AG04450 (cell line): ENCODE measurements at regions of chr18 and their contacts with region 1.

Region 1: GRCh38 chr18:23032030-23032582 is 99.0 kb downstream of the RBBP8 start:
- DNase-seq: peak; percentile 58
- H3K4me3 ChIP-seq: no peak overlapping the region
- H3K27ac ChIP-seq: peak overlapping the region; percentile 81
- H3K27me3 ChIP-seq: no peaks in the 10 kb centered on the region
- CTCF ChIP-seq: no peak

Region 2: DNA sequence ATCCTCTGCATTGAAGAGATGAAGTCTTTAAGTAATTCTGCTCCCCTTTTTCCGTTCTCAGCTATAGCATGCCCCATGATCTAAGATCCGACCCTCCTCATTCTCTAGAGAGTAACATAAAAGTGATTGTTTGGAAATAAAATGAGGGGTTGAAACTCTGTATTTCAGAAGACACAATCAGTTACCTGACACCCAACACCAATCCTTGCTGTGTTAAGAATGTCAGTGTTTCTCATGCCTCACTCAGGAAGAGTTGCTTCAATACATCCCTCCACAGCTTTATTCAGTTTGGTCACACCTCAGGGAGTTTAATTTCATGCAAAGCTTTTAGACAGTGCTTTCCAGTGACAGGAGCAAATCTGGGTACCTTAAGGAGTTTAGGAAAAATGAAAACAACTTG is 148.9 kb before region 1 on chr18:
- CTCF ChIA-PET with region 1: no interaction called
- POLR2A ChIA-PET with region 1: no interaction called
- DNase-seq: no peak
- H3K4me3 ChIP-seq: no peak overlapping the region
- H3K27ac ChIP-seq: no peak overlapping the region
- H3K27me3 ChIP-seq: no peaks in the 10 kb centered on the region
- CTCF ChIP-seq: no peak

Region 3: DNA sequence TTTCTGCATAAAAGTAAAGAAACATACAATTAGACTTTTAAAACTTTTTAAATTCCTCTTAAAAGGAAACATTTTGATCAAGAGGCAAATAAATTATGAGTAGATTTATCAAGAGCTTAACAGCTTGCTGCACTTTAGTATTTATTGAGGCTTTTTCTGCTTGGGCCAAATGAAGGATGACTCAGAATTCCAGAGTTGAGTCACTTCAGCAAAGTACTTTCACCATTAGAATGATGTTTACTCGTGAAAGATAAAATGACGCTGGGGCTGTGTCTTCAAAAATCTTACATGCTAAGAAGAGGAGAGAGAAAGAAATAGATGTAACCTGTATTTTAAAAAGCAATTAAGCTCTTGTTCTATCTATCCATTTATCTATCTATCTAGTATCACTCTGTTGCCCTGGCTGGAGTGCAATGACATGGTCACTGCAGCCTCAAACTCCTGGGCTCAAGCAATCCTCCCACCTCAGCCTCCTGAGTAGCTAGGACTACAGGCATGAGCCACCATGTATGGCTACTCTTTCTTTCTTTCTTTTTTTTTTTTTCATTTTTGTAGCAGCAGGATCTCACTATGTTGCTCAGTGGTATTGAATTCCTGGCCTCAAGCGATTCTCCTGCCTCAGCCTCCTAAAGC is 345.7 kb after region 1 on chr18:
- CTCF ChIA-PET with region 1: interaction called, 26 read pairs
- POLR2A ChIA-PET with region 1: interaction called, 9 read pairs
- DNase-seq: peak; percentile 54
- H3K4me3 ChIP-seq: no peak overlapping the region
- H3K27ac ChIP-seq: peak overlapping the region; percentile 85
- H3K27me3 ChIP-seq: no peaks in the 10 kb centered on the region
- CTCF ChIP-seq: no peak

Region 4: DNA sequence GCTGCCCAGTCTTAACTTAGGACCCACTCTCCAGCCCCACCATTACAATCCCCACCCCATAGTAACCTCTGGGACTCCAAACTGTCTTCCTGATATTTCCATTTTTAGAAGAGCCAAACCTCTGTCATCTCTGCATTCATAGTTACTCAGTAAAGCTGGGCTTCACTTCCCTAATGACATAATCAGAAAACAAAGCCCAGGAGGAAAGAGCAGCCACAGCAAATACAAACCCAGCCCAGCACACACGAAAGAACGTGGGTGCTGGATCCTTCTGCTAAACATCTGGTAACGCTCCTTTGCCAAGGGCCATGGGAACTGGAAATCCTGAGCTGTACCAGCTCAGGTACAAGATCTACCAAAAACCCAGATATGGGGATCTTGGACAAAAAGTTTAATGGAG is 384.2 kb after region 1 on chr18:
- CTCF ChIA-PET with region 1: interaction called, 31 read pairs
- POLR2A ChIA-PET with region 1: no interaction called
- DNase-seq: no peak
- H3K4me3 ChIP-seq: no peak overlapping the region
- H3K27ac ChIP-seq: no peak overlapping the region
- H3K27me3 ChIP-seq: no peaks in the 10 kb centered on the region
- CTCF ChIP-seq: no peak